Ascending aorta (tissue), 2 donors: ENCODE measurements at regions of chr15 and their contacts with region 1.

Region 1: GRCh38 chr15:85402195-85402881 is 21.9 kb downstream of the AKAP13 start:
- DNase-seq: no peak
- H3K4me3 ChIP-seq: no peak overlapping the region
- H3K27ac ChIP-seq: peak overlapping the region; percentile 6 to 39
- H3K4me1 ChIP-seq: peaks cover 8 to 56% of the 10 kb centered on the region in 2 donors
- H3K27me3 ChIP-seq: no peaks in the 10 kb centered on the region
- CTCF ChIP-seq: no peak

Region 2: DNA sequence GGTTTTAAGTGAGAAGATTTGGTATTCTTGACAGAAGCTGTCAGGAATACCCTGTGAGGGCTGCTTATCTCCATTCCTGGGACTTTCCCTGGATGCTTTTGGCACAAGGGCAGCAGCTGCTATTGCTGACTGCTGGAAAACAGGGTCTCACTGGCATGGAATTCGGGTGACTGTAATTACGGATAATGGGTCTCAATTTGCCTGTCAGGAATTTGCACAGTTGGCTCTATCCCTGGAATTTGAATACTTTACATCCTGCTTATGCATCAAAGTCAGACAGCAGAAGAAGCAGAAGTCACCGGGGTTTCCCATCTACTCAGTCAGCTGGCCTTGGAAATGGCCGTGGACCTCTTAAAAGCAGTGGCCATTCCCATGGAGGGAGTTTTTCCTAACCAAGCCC is 47.9 kb before region 1 on chr15:
- intact Hi-C with region 1: loop called (anchors 2 kb)
- DNase-seq: no peak
- H3K4me3 ChIP-seq: no peak overlapping the region
- H3K27ac ChIP-seq: no peak overlapping the region
- H3K4me1 ChIP-seq: peaks cover 3 to 5% of the 10 kb centered on the region in 2 donors
- H3K27me3 ChIP-seq: no peaks in the 10 kb centered on the region
- CTCF ChIP-seq: no peak

Region 3: DNA sequence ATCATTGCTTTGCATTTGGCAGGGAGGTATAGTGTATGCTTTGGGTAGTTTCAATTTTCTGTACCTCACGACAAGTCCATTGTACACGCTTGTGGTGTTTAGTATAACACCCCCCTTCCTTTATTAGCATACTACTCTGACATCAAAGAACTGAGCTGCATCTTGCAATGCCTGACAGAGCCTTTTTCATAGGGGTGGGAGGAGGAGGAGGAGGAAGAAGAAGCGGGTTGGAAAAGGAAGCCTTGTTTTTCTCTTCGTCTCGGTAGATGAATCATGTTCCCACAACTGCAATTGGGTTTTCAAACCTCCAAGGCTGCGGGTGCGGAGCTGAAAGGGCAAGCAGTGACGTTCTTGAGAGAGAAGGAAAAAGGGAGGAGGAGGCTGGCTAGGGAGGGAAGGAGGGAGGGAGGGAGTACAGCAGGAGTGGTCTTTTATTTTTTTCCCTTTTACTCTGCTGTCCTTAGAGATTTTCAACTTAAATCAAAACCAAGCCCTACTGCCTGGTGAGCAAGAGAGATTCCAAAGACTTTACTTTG is 216.7 kb after region 1 on chr15:
- intact Hi-C with region 1: no loop called
- DNase-seq: peak; percentile 68 to 94
- H3K4me3 ChIP-seq: peak overlapping the region; percentile 58 to 74
- H3K27ac ChIP-seq: peak overlapping the region; percentile 85 to 86
- H3K4me1 ChIP-seq: peaks cover 16 to 36% of the 10 kb centered on the region in 2 donors
- H3K27me3 ChIP-seq: no peaks in the 10 kb centered on the region
- CTCF ChIP-seq: no peak